ENCODE measurements at regions of chr10 and their contacts with region 1.

Region 1: DNA sequence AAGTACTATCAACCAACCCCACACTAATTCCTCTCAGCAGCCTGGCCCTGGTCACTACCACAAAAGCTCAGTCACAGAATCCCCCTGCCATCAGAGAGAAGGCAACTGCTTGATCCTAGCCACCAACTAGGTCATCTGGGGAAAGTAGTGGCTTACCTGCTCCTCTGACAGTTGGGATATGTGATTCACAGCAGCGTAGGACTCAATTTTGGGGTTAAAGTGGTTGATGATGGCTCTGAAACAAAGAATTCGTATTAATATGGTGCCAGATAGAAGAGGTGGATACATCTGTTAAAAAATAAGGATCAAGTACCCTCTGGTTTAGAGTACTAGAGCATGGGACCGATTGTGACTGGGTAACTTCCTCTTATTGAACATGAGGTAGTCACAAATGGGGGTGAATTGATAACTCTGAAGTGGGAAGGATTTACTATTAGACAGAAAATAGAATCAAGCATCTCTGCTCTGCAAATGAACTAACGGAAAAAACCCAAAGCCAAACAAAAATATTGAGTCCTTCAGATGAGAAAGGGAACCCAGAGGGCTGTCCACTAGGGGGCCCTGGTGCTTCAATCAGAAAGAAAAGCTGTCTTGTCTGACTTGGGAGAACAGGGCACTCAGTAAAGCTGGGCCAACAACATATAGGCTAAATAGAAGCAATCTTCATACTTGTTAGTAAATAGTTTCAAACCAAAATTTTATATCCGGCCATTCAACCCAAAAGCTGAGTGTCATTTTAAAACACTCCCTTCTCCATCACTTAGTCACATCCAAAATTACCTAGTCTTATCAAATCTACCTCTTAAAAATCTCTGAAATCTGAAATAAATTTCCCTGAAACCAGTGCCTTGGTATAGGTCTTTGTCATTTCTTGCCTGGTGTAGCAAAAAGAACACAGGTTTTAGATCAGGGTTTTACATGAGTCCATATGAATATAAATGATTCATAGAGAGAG is 45.9 kb upstream of the KCNIP2 start:
- DNase-seq: no peak

Region 2: DNA sequence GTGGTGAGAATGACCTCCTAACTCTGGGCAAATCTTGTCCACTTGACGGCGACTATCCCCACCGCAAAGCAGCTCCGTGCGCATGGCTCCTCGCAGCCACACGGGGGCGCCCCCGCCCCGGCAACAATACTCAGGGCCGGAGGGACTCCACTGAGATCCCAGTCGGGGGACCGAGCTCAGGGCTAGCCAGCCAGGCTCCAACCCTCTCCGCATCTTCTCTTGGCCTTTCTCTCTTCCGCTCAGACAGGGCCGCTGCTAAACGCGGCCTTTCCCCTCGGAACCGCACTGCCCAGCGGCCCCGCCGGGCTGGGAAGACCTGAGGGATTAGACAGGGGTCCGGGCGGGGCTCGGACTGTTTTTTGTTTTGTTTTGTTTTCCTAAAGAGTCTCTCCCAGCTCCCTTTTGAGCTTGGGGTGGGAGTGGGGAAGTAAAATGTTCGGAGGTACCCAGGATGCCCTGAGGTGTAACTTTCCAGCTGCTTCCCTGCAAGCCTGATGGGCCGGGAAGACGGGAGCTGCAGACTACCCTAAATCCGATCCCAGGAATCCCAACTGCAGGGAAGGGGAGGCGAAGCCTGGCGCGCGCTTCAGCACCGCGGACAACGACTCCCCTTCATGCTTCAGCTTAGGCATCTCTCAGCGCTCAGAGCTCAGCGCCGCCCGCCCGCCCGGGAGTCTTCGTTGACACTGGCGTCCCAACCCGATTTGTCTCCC is 48.6 kb before region 1 on chr10:
- intact Hi-C with region 1: loop called (anchors 5 kb)
- DNase-seq: peak; percentile 93

Region 3: GRCh38 chr10:102024799-102025198 is 135.3 kb after region 1 on chr10:
- intact Hi-C with region 1: no loop called
- DNase-seq: no peak